ENCODE measurements at regions of chr4 and their contacts with region 1.

Region 1: DNA sequence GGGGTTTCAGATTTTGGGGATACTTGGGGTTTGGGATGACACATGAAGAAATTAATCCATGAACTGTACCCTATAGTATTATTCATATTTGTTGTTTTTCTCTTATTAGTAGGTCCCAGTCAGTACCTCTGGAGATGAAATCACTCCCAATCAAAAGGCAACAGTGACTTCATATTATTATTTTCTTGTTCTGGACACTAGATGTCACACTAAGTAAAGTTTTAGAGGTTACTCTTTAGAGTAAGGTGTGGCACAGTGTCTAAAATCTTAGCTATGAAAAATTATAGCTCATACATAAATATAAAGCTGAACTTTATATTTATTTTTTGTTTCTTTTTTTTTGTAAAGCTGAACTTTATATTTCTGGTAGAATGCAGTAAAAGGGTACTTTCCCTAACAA is 35.1 kb downstream of the FAM114A1 start:
- DNase-seq: no peak
- H3K4me3 Mint-ChIP-seq: no peak overlapping the region
- H3K27ac Mint-ChIP-seq: no peak overlapping the region
- H3K4me1 Mint-ChIP-seq: peaks cover 9% of the 10 kb centered on the region
- H3K27me3 Mint-ChIP-seq: peaks cover 3% of the 10 kb centered on the region

Region 2: GRCh38 chr4:38237139-38237538 is 665.6 kb before region 1 on chr4:
- CTCF ChIA-PET with region 1: no interaction called
- POLR2A ChIA-PET with region 1: no interaction called
- intact Hi-C with region 1: no loop called
- DNase-seq: no peak
- H3K4me3 Mint-ChIP-seq: no peak overlapping the region
- H3K27ac Mint-ChIP-seq: no peak overlapping the region
- H3K4me1 Mint-ChIP-seq: no peaks in the 10 kb centered on the region
- H3K27me3 Mint-ChIP-seq: no peaks in the 10 kb centered on the region

Region 3: GRCh38 chr4:38759113-38759789 is 143.4 kb before region 1 on chr4:
- CTCF ChIA-PET with region 1: interaction called, 25 read pairs
- POLR2A ChIA-PET with region 1: no interaction called
- intact Hi-C with region 1: no loop called
- DNase-seq: peak; percentile 74
- H3K4me3 Mint-ChIP-seq: no peak overlapping the region
- H3K27ac Mint-ChIP-seq: no peak overlapping the region
- H3K4me1 Mint-ChIP-seq: peaks cover 7% of the 10 kb centered on the region
- H3K27me3 Mint-ChIP-seq: no peaks in the 10 kb centered on the region

Region 4: DNA sequence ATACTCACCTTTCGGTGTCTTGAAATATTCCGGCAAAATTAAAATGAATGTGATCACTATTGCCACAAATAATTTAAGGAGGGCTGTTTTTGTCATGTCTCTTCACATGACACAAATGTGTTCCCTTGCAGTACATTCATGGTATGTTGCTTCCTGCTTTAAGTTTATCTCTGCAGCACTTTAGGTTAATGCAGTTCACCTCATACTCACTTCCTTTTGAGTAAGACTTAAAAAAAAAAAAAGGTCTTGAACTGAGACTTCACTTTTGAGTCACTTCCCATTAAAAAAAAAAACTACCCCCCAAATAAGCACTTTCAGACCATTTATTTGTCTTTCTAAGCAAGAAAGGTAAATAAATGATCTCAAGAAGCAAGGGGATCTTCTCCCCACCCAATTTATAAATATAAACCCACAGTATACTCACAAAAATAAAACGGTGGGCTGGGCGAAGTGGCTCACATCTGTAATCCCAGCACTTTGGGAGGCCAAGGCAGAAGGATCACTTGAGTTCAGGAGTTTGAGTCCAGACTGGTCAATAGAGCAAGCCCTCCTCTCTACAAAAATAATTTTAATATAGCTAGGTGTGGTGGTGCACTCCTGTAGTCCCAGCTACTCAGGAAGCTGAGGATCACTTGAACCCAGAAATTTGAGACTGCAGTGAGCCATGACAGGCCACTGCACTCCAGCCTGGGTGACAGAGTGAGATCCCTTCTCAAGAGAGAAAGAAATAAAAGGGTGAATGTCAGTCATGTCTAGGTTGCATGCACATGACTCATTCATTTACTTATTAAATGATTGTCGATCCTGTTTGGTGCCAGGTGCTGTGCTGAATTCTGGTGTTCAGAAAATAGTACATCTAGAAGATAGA is 129.8 kb after region 1 on chr4 and contains the start of gene TMEM156:
- CTCF ChIA-PET with region 1: interaction called, 4 read pairs
- POLR2A ChIA-PET with region 1: no interaction called
- intact Hi-C with region 1: loop called (anchors 5 kb)
- DNase-seq: peak; percentile 71
- H3K4me3 Mint-ChIP-seq: peak within 1 kb of the TSS; percentile 78
- H3K27ac Mint-ChIP-seq: peak within 1 kb of the TSS; percentile 87
- H3K4me1 Mint-ChIP-seq: peaks cover 47% of the 10 kb centered on the region
- H3K27me3 Mint-ChIP-seq: no peaks in the 10 kb centered on the region
- total RNA-seq, gene TMEM156: 28.0 to 28.4 TPM

Region 5: DNA sequence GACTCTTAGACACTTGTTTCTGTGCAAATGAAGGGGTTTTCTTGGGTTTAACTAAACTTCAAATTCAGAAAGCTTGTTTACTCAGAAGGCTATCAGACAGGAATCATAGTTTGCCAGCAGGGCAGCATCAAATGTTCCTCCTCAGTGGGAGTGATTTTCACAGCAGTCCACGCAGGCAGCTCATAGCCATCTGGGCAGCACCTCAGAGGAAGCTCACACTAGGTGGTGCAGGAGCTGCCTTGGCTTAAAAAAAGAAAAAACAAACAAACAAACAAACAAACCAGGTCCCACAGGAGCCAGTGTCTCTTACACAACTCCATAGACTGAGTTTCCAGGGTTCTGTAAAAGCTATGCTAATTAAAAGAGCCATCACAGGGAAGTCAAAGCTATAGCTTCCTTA is 148.8 kb after region 1 on chr4:
- CTCF ChIA-PET with region 1: interaction called, 13 read pairs
- POLR2A ChIA-PET with region 1: no interaction called
- intact Hi-C with region 1: no loop called
- DNase-seq: no peak
- H3K4me3 Mint-ChIP-seq: no peak overlapping the region
- H3K27ac Mint-ChIP-seq: no peak overlapping the region
- H3K4me1 Mint-ChIP-seq: peaks cover 65% of the 10 kb centered on the region
- H3K27me3 Mint-ChIP-seq: no peaks in the 10 kb centered on the region

Region 6: DNA sequence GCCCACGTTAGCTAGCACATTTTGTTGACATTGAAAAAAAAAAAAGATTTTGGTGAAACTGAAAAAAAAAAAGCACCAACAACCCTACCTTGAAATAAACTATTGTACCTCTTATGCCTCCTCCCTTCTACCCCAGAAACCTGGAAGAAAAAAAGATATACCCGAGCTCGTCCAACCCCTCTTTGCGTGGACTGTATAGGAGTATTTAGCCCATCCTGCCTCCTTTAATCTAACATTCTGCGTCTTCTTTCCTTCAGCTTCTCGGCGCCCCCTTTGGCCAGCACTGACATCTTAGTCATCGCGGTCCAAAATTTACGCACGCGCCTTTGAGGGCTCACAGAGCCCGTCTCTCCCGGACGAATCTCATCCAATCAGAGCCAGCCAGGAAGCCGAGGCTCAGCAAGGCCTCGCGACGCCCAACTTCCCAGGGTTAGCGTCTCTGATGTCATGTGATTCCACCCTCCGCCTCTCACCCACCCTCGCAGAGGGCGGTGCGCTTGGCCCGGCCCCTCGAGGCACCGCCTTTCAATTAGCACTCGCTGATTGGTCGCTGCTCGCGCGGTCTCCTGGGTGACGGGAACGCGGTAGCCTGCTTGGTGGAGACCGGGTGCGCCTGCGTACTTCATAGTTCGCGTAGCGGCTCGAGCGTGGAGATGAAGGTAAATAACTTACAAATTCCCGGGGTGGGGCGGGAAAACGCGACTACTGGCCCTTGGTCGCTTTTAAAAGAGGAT is 279.4 kb after region 1 on chr4 and contains the start of gene WDR19:
- CTCF ChIA-PET with region 1: interaction called, 12 read pairs
- POLR2A ChIA-PET with region 1: interaction called, 3 read pairs
- intact Hi-C with region 1: loop called (anchors 1 kb)
- DNase-seq: peak; percentile 99
- H3K4me3 Mint-ChIP-seq: no peak within 1 kb of the TSS
- H3K27ac Mint-ChIP-seq: no peak within 1 kb of the TSS
- H3K4me1 Mint-ChIP-seq: peaks cover 5% of the 10 kb centered on the region
- H3K27me3 Mint-ChIP-seq: no peaks in the 10 kb centered on the region
- total RNA-seq, gene WDR19: 16.4 to 17.9 TPM